ENCODE measurements at regions of chr2 and their contacts with region 1.

Region 1: GRCh38 chr2:101697124-101698013 is at the start of gene MAP4K4:
- DNase-seq: peak; percentile 67
- H3K4me3 ChIP-seq: peak within 1 kb of the TSS; percentile 55 to 98 (median 96)
- H3K27ac ChIP-seq: peak within 1 kb of the TSS; percentile 85
- H3K4me1 ChIP-seq: peaks cover 20% of the 10 kb centered on the region
- H3K27me3 ChIP-seq: no peaks in the 10 kb centered on the region
- CTCF ChIP-seq: peak in 1 of 2 donors; percentile 11
- POLR2A ChIP-seq: peak; percentile 88
- total RNA-seq, gene MAP4K4: 251 and 269 TPM in 2 replicates

Region 2: DNA sequence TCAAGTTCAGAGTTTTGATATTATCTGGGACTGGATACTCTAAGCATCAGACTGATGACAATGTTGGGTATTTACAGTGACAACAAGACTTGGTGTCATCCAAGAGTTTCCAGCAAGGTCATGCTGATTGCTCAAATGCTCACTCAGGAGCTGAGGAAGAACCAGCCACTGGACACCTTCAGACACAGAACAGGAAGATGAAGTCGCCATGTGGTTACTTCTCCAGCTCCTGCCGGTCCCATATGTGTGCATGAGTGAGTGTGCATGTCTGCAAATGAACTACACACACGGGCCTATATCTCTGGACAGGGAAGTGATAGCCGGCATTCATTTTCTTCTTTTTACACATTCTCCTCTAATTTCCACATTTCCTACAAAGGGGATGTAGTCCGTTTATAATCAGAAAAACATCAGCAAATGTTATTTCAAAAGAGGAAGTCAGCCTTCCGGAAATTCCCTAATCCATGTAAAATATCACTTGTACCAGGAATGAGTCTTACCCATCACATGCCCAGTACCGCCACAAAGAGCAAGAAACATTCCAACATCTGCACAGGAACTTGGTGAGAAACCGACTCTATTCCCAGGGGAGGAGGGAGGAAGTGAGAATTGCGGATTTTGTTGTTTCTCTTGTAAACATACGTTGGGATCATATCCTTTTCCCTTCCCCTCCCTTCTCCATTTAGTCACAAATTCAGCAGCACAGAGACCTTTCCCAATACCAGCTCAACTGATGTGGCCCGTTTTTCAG is 233.3 kb before region 1 on chr2:
- CTCF ChIA-PET with region 1: interaction called, 7 read pairs
- POLR2A ChIA-PET with region 1: no interaction called
- dilution Hi-C with region 1: no loop called
- intact Hi-C with region 1: loop called (anchors 1 kb)
- DNase-seq: peak; percentile 95
- H3K4me3 ChIP-seq: no peak overlapping the region
- H3K27ac ChIP-seq: peak overlapping the region; percentile 89
- H3K4me1 ChIP-seq: peaks cover 39% of the 10 kb centered on the region
- H3K27me3 ChIP-seq: no peaks in the 10 kb centered on the region
- CTCF ChIP-seq: no peak
- POLR2A ChIP-seq: peak; percentile 64

Region 3: DNA sequence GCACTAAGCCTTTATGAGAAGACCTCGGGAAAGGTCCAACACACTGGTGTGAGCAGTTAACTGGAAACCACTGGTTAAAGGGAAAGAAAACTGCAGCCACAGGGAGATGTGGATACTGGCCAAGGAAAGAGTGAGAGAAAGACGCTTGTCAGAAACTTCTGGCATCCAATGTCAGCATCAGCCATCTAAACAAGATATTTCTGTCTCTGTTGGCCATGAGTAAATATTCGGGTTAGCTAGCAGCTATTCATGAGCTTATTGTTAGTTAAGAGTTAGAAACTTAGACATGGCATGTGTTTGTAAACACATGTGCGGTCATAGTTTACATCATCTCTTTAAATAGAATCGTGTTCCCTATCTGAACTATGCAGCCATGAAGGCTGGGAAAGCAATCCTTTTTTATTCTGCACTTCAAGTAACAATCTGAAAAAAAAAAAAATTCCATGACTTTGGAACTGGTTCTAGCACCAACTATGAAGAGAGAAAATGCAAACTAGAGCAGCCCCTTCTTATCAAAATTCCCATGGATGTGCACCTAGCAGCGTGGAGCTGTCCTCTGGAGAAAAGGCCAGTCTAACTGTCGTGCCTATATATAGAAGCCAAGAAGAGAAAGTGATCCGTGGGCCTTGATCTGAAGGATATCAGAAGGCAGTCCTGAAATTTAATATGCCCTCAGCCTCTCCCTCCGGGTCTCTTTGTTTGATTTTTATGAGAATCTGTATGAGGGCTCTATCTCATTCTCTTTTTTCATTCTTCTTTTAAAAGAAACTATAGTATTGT is 138.4 kb before region 1 on chr2:
- CTCF ChIA-PET with region 1: no interaction called
- POLR2A ChIA-PET with region 1: no interaction called
- dilution Hi-C with region 1: no loop called
- intact Hi-C with region 1: loop called (anchors 10 kb)
- DNase-seq: peak; percentile 72
- H3K4me3 ChIP-seq: no peak overlapping the region
- H3K27ac ChIP-seq: peak overlapping the region; percentile 32
- H3K4me1 ChIP-seq: peaks cover 18% of the 10 kb centered on the region
- H3K27me3 ChIP-seq: no peaks in the 10 kb centered on the region
- CTCF ChIP-seq: no peak
- POLR2A ChIP-seq: no peak

Region 4: DNA sequence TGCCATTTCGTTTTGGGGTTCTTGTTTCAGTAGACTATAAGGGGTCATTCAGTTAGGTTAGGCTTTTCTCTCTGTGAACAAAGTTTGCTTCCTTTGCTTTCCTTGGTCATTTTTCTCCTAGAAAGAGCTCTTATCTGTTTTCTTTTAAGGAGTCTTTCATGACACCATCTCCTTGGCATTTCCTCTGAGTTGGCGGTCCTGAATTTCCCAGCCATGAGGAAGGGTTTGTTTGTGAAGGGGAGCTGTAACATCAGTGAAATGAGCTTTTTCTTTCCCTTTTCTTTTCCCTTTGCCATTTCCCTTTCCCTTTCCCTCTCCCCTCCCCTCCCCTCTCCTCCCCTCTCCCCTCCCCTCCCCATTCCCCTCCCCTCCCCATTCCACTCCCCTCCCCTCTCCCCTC is 61.8 kb after region 1 on chr2:
- CTCF ChIA-PET with region 1: interaction called, 6 read pairs
- POLR2A ChIA-PET with region 1: interaction called, 5 read pairs
- dilution Hi-C with region 1: no loop called
- intact Hi-C with region 1: loop called (anchors 5 kb)
- DNase-seq: peak; percentile 95
- H3K4me3 ChIP-seq: no peak overlapping the region
- H3K27ac ChIP-seq: peak overlapping the region; percentile 73
- H3K4me1 ChIP-seq: peaks cover 41% of the 10 kb centered on the region
- H3K27me3 ChIP-seq: no peaks in the 10 kb centered on the region
- CTCF ChIP-seq: no peak
- POLR2A ChIP-seq: no peak

Region 5: GRCh38 chr2:101823347-101823791 is 126.0 kb after region 1 on chr2:
- CTCF ChIA-PET with region 1: interaction called, 64 read pairs
- POLR2A ChIA-PET with region 1: interaction called, 6 read pairs
- dilution Hi-C with region 1: no loop called
- intact Hi-C with region 1: loop called (anchors 2 kb)
- DNase-seq: peak; percentile 79
- H3K4me3 ChIP-seq: no peak overlapping the region
- H3K27ac ChIP-seq: peak overlapping the region; percentile 30
- H3K4me1 ChIP-seq: peaks cover 54% of the 10 kb centered on the region
- H3K27me3 ChIP-seq: no peaks in the 10 kb centered on the region
- CTCF ChIP-seq: peak; percentile 54 to 67
- POLR2A ChIP-seq: no peak

Region 6: DNA sequence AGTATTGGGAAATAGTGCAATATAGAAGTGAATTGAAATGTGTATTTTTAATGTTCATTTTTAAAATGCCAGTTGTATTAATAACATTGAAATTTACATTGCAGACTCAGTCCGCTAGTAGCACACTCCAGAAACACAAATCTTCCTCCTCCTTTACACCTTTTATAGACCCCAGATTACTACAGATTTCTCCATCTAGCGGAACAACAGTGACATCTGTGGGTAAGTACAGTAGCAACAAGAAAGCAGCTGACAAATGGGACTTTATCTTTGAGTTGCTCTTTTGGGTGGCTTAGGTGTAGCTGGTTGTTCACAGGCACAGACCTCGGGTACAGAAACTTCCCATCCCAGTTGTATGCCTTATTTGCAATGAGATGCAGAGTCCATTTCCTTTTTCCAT is 176.2 kb after region 1 on chr2:
- CTCF ChIA-PET with region 1: no interaction called
- POLR2A ChIA-PET with region 1: no interaction called
- dilution Hi-C with region 1: no loop called
- intact Hi-C with region 1: no loop called
- DNase-seq: no peak
- H3K4me3 ChIP-seq: no peak overlapping the region
- H3K27ac ChIP-seq: no peak overlapping the region
- H3K4me1 ChIP-seq: no peaks in the 10 kb centered on the region
- H3K27me3 ChIP-seq: no peaks in the 10 kb centered on the region
- CTCF ChIP-seq: no peak
- POLR2A ChIP-seq: no peak

Measured in endothelial cell of umbilical vein (primary cell).